Caco-2 (cell line): ENCODE measurements at regions of chr17 and their contacts with region 1.

Region 1: GRCh38 chr17:75289115-75289831 is at the start of gene SLC25A19:
- DNase-seq: peak; percentile 99
- H3K4me3 ChIP-seq: peak within 1 kb of the TSS; percentile 69
- H3K4me3 Mint-ChIP-seq: peak within 1 kb of the TSS; percentile 97
- H3K27ac Mint-ChIP-seq: peak within 1 kb of the TSS; percentile 96
- H3K4me1 ChIP-seq: peaks cover under 1% of the 10 kb centered on the region; the same call in 1 of the 2 replicates
- H3K4me1 Mint-ChIP-seq: peaks cover 7% of the 10 kb centered on the region
- H3K27me3 ChIP-seq: no peaks in the 10 kb centered on the region
- H3K27me3 Mint-ChIP-seq: no peaks in the 10 kb centered on the region
- CTCF ChIP-seq: peak; percentile 45 to 74
- total RNA-seq, gene SLC25A19: 29.8 and 33.6 TPM in 2 replicates

Region 2: DNA sequence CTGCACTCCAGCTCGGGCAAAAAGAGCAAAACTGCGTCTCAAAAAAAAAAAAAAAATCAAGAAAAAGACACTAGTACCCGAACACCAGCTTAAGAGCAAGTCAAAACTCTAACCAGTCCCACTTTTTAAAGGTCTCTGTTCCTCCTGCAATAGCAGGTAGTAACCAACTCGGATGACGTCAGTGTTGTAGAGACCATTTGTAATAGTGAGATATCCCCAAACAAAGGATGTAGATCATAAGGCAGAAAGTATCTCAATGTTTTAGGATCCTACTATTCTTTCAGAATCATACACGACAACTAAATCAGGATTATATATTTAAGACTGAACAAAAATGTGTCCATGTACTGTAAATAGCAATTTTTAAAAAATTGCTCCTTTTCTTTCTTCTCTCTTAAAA is 137.3 kb before region 1 on chr17:
- CTCF ChIA-PET with region 1: no interaction called
- POLR2A ChIA-PET with region 1: no interaction called
- intact Hi-C with region 1: no loop called
- DNase-seq: no peak
- H3K4me3 ChIP-seq: no peak overlapping the region
- H3K4me3 Mint-ChIP-seq: peak overlapping the region; percentile 98
- H3K27ac Mint-ChIP-seq: peak overlapping the region; percentile 95
- H3K4me1 ChIP-seq: peaks cover 12% of the 10 kb centered on the region
- H3K4me1 Mint-ChIP-seq: peaks cover 34% of the 10 kb centered on the region
- H3K27me3 ChIP-seq: no peaks in the 10 kb centered on the region
- H3K27me3 Mint-ChIP-seq: no peaks in the 10 kb centered on the region
- CTCF ChIP-seq: no peak

Region 3: DNA sequence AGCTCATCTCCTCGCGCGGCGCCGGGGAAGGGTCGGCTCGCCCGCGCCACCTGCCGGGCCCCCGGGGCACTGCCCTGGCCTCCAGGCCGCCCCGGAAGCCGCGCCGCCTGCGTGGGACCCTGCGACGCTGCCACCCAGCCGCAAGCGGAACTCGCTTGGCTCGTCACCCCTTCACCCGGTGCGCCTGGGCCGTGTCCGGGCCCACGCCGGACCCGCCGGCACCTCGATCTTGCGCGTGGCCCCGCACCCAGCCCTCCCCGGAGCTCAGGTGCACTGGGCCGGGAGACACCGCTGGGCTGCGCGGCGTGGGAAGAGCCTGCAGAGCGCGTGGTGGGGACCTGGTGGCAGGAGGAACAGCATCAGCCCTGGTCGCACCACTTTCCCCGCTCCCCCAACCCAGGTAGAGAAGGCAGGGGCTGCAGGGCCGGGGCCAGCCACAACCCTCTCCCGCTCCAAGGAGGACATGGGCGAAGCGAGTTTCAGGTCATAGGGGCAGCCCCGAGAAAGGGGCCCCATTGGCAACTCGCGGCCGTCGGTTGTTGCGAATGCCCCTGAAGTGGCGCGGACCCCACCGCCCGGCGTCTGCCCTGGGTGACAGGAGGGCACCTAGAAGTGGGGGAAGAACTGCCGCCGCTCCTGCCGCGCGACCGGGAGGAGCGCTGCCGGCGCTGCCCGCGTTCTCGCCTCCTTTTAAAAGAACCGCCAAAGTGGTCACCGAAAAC is 17.9 kb before region 1 on chr17:
- CTCF ChIA-PET with region 1: interaction called, 91 read pairs
- POLR2A ChIA-PET with region 1: interaction called, 44 read pairs
- intact Hi-C with region 1: loop called (anchors 2 kb)
- DNase-seq: peak; percentile 67 to 93
- H3K4me3 ChIP-seq: peak overlapping the region; percentile 97
- H3K4me3 Mint-ChIP-seq: peak overlapping the region; percentile 71
- H3K27ac Mint-ChIP-seq: peak overlapping the region; percentile 1
- H3K4me1 ChIP-seq: peaks cover 14% of the 10 kb centered on the region; the same call in 1 of the 2 replicates
- H3K4me1 Mint-ChIP-seq: peaks cover 15% of the 10 kb centered on the region
- H3K27me3 ChIP-seq: no peaks in the 10 kb centered on the region
- H3K27me3 Mint-ChIP-seq: no peaks in the 10 kb centered on the region
- CTCF ChIP-seq: peak; percentile 41 to 91

Region 4: DNA sequence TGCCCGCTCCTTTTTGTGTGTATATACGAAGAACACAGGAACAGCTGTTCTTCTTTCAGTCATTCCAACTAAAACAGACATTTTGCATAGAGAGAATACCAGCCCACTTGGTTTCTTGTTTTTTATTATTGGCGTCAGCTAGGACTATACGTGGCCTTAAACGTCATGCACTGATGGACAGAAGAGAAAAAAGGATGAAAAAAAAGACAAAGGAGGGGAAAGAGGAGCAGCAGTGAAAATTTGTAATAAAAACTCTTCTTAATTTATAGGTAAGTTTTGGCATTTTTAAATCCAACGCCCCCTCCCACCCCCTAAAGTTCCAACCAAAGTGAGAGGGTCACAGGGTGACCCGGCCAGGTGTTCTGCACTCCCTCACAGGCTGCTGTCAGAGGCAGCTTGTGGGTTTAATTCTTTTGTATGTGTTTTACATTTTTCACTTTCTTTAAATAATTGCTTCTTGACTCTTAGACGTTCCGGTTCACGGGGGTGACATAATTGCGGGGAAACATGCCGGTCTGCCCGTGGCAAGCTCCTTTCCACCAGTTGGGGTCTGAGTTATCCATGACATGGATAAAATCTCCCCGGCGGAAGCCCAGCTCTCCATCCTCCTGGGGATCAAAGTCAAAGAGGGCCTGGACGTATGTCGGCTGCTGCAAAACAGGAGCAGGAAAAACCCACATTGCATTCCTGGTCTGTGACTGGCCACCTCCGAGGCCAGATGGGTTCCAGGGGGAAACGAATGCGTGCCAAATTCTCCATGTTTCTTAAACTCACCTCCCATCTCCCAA is 30.8 kb after region 1 on chr17:
- CTCF ChIA-PET with region 1: interaction called, 14 read pairs
- POLR2A ChIA-PET with region 1: interaction called, 8 read pairs
- intact Hi-C with region 1: no loop called
- DNase-seq: no peak
- H3K4me3 ChIP-seq: no peak overlapping the region
- H3K4me3 Mint-ChIP-seq: no peak overlapping the region
- H3K27ac Mint-ChIP-seq: no peak overlapping the region
- H3K4me1 ChIP-seq: no peaks in the 10 kb centered on the region
- H3K4me1 Mint-ChIP-seq: no peaks in the 10 kb centered on the region
- H3K27me3 ChIP-seq: no peaks in the 10 kb centered on the region
- H3K27me3 Mint-ChIP-seq: no peaks in the 10 kb centered on the region
- CTCF ChIP-seq: no peak

Region 5: GRCh38 chr17:75393523-75394331 is 104.5 kb after region 1 on chr17:
- CTCF ChIA-PET with region 1: interaction called, 16 read pairs
- POLR2A ChIA-PET with region 1: interaction called, 16 read pairs
- intact Hi-C with region 1: no loop called
- DNase-seq: peak; percentile 99
- H3K4me3 ChIP-seq: peak overlapping the region; percentile 67
- H3K4me3 Mint-ChIP-seq: peak overlapping the region; percentile 91
- H3K27ac Mint-ChIP-seq: peak overlapping the region; percentile 63
- H3K4me1 ChIP-seq: peaks cover 37% of the 10 kb centered on the region
- H3K4me1 Mint-ChIP-seq: peaks cover 22% of the 10 kb centered on the region
- H3K27me3 ChIP-seq: no peaks in the 10 kb centered on the region
- H3K27me3 Mint-ChIP-seq: no peaks in the 10 kb centered on the region
- CTCF ChIP-seq: peak; percentile 5 to 36

Region 6: DNA sequence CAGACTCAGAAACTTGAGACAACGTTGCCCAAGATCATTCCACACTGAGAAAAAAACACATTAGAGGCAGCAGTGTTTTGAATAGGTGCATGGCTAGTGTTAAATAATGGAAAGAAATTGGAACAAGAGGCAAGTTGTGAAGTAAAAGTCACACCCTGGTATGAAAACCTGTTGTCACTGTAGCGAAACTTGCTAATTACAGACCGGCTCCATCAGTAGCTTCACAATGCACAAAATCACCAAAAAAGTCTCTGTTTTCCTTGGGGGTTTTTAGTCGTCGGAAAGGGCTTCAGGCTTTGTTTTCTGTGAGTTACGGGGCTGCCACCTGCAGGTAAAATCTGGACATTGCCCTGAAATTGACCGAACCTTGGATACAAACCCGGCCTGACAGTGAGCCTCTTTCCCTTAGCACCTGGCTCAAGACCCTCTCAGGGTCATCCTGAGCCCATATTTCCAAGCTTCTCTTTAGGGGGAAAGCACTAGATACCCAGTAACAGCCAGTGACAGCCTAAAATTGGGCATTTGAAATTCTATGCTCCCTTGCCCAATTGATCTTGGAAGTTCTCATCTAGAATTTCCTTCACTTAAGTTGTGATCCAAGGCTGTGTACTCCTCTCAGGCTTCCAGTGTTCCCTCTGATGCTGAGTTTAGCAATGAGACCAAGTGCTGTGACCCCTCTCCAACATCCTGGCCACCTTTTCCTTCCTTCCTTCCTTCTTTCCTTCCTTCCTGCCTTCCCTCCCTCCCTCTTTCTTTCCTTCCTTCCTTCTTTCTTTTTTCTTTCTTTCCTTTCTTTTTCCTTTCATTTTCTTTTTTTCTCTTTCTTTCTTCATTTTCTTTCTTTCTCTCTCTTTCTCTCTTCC is 123.4 kb after region 1 on chr17:
- CTCF ChIA-PET with region 1: interaction called, 6 read pairs
- POLR2A ChIA-PET with region 1: interaction called, 7 read pairs
- intact Hi-C with region 1: loop called (anchors 1 kb)
- DNase-seq: peak; percentile 69 to 79
- H3K4me3 ChIP-seq: peak overlapping the region; percentile 11; the same call in 1 of the 2 replicates
- H3K4me3 Mint-ChIP-seq: peak overlapping the region; percentile 27
- H3K27ac Mint-ChIP-seq: no peak overlapping the region
- H3K4me1 ChIP-seq: peaks cover 6% of the 10 kb centered on the region
- H3K4me1 Mint-ChIP-seq: no peaks in the 10 kb centered on the region
- H3K27me3 ChIP-seq: no peaks in the 10 kb centered on the region
- H3K27me3 Mint-ChIP-seq: peaks cover 2% of the 10 kb centered on the region
- CTCF ChIP-seq: peak; percentile 80 to 90

Region 7: GRCh38 chr17:75515496-75516254 is 226.4 kb after region 1 on chr17 and contains the start of gene CASKIN2:
- CTCF ChIA-PET with region 1: interaction called, 11 read pairs
- POLR2A ChIA-PET with region 1: interaction called, 5 read pairs
- intact Hi-C with region 1: no loop called
- DNase-seq: peak; percentile 97 to 99
- H3K4me3 ChIP-seq: peak within 1 kb of the TSS; percentile 93
- H3K4me3 Mint-ChIP-seq: peak within 1 kb of the TSS; percentile 94
- H3K27ac Mint-ChIP-seq: no peak within 1 kb of the TSS
- H3K4me1 ChIP-seq: peaks cover 15% of the 10 kb centered on the region; the same call in 1 of the 2 replicates
- H3K4me1 Mint-ChIP-seq: peaks cover 12% of the 10 kb centered on the region
- H3K27me3 ChIP-seq: no peaks in the 10 kb centered on the region
- H3K27me3 Mint-ChIP-seq: no peaks in the 10 kb centered on the region
- CTCF ChIP-seq: peak; percentile 99
- total RNA-seq, gene CASKIN2: 41.8 and 48.9 TPM in 2 replicates

Region 8: DNA sequence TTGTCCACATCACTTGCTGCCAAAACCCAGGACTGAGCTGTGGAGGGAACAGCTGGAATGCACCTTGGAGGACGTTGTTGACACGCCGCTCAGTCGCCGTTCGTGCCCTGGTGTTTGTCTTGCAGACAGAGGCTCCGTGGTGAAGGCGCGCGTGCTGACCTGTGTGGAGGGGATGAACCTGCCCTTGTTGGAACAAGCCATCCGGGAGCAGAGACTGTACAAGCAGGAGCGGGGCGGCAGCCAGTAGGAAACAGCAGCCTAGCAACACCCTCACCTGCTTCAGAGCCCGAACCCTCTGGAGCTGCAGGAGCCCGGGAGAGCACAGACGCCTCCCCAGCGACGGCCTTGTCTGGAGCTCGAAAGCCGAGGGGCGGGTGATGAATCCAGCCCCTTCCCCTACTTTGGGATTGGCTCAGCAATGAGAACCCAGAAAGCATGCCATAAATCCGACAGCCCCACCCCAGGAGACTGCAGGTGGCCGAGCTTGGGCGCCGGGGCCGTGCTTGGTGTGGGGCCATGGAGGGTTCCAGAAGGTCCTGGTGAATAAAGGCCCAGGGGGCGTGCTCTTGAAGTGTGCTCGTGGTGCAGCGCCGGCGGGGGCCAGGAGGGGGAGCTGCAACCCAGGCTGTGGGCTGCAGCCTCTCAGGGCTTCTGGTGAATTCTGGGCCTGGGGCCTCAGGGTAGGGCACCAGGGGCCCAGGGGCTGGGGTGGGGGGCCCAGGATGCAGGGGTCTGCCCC is 710.9 kb after region 1 on chr17:
- CTCF ChIA-PET with region 1: no interaction called
- POLR2A ChIA-PET with region 1: no interaction called
- intact Hi-C with region 1: no loop called
- DNase-seq: peak; percentile 65 to 81
- H3K4me3 ChIP-seq: no peak overlapping the region
- H3K4me3 Mint-ChIP-seq: no peak overlapping the region
- H3K27ac Mint-ChIP-seq: no peak overlapping the region
- H3K4me1 ChIP-seq: peaks cover 54% of the 10 kb centered on the region
- H3K4me1 Mint-ChIP-seq: peaks cover 25% of the 10 kb centered on the region
- H3K27me3 ChIP-seq: no peaks in the 10 kb centered on the region
- H3K27me3 Mint-ChIP-seq: no peaks in the 10 kb centered on the region
- CTCF ChIP-seq: peak; percentile 86 to 95